HEK293 (cell line): ENCODE measurements at regions of chr3 and their contacts with region 1.

Region 1: GRCh38 chr3:9302425-9303181 is 53.2 kb upstream of the SRGAP3 start:
- H3K4me3 ChIP-seq: peak overlapping the region; percentile 18
- H3K27ac ChIP-seq: no peak overlapping the region
- H3K4me1 ChIP-seq: no peaks in the 10 kb centered on the region
- CTCF ChIP-seq: peak; percentile 95

Region 2: GRCh38 chr3:8970971-8971589 is 331.5 kb before region 1 on chr3:
- CTCF ChIA-PET with region 1: interaction called, 136 read pairs
- POLR2A ChIA-PET with region 1: interaction called, 5 read pairs
- H3K4me3 ChIP-seq: no peak overlapping the region
- H3K27ac ChIP-seq: no peak overlapping the region
- H3K4me1 ChIP-seq: no peaks in the 10 kb centered on the region
- CTCF ChIP-seq: peak; percentile 63

Region 3: GRCh38 chr3:8987645-8988383 is 314.8 kb before region 1 on chr3:
- CTCF ChIA-PET with region 1: interaction called, 81 read pairs
- POLR2A ChIA-PET with region 1: interaction called, 3 read pairs
- H3K4me3 ChIP-seq: no peak overlapping the region
- H3K27ac ChIP-seq: no peak overlapping the region
- H3K4me1 ChIP-seq: no peaks in the 10 kb centered on the region
- CTCF ChIP-seq: peak; percentile 60; the same call in 1 of the 2 replicates

Region 4: DNA sequence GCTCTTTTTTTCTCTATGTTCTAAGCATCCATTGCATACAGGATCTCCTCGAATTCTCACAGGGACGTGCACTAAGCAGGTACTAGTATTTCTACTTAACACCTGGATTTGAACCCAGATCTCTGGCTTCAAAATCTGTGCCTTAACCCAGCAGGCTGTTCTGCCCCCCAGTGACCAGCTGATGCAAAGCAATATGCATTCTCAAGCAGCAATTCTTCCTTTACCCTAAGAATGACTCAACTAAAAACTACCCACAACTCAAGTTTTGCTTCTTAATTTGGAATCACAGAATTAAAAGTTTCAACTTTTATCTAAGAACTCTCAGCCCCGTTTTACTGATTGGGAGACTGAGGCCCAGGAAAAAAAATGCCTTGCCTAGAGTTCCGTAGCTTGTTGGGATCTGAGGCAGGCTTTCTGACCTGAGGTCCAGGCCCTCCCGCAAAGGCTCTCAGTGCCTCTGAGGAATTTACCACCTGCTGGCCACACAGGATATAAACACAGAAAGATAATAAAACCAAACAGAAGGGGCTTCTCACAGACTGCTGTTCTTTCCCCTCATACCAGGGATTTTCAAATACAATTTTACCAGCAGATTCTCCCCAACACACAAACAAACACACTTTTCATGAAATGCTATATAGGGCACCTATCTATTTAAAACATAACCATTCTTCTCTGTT is 223.9 kb before region 1 on chr3:
- CTCF ChIA-PET with region 1: interaction called, 15 read pairs
- POLR2A ChIA-PET with region 1: no interaction called
- H3K4me3 ChIP-seq: no peak overlapping the region
- H3K27ac ChIP-seq: no peak overlapping the region
- H3K4me1 ChIP-seq: no peaks in the 10 kb centered on the region
- CTCF ChIP-seq: no peak

Region 5: DNA sequence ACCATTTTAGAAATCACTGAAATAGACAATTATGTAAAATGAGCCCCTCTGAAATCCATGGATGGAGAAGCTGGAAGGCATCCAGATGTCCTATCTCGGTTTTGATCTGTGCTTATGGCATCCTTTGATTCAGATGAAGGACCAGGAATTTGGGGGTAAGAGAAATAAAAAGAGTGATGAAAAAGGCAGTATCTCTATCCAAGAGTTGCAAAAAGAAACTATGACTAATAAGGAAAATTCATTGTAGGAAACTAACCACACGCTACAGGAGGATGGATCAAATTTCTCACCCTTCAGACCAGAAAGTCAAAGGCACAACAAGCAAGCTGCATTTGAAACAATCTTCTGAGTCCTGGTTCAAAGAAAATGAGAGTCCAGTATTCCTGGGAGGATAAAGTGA is 88.0 kb before region 1 on chr3:
- CTCF ChIA-PET with region 1: interaction called, 10 read pairs
- POLR2A ChIA-PET with region 1: no interaction called
- H3K4me3 ChIP-seq: no peak overlapping the region
- H3K27ac ChIP-seq: no peak overlapping the region
- H3K4me1 ChIP-seq: peaks cover 16% of the 10 kb centered on the region
- CTCF ChIP-seq: no peak

Region 6: GRCh38 chr3:9290566-9290965 is 12.0 kb before region 1 on chr3:
- CTCF ChIA-PET with region 1: interaction called, 14 read pairs
- POLR2A ChIA-PET with region 1: no interaction called
- H3K4me3 ChIP-seq: no peak overlapping the region
- H3K27ac ChIP-seq: no peak overlapping the region
- H3K4me1 ChIP-seq: no peaks in the 10 kb centered on the region
- CTCF ChIP-seq: no peak

Region 7: DNA sequence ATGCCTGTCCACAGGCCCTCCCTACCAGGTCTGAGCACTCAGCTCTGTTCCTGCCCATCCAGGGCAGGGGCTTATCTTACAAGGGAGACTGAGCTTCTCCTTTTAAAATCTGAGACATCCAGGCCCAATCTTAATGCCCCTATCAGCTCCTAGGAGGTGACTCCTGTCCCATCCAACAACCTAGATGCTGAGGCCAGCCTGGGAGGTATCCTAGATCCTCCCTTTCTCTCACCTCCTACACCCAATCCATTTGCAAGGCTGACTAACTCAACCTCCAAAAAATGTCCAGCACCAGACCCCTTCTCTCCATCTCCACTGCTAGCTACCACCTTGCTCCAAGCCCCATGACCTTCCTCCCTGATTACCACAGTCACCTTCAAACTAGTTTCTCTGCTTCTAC is 233.6 kb after region 1 on chr3:
- CTCF ChIA-PET with region 1: no interaction called
- POLR2A ChIA-PET with region 1: no interaction called
- H3K4me3 ChIP-seq: no peak overlapping the region
- H3K27ac ChIP-seq: no peak overlapping the region
- H3K4me1 ChIP-seq: no peaks in the 10 kb centered on the region
- CTCF ChIP-seq: no peak